ENCODE measurements at regions of chr5 and their contacts with region 1.

Region 1: GRCh38 chr5:149820536-149821510 is 90.7 kb downstream of the PPARGC1B start:
- DNase-seq: no peak
- ATAC-seq: no peak
- H3K4me3 ChIP-seq: peak overlapping the region; percentile 15 to 49 (median 37)
- H3K27ac ChIP-seq: peak overlapping the region in 9 of 10 donors; percentile 50 to 89 (median 79)
- H3K4me1 ChIP-seq: peaks cover 36 to 83% (median 53%) of the 10 kb centered on the region in 9 donors
- H3K27me3 ChIP-seq: no peaks in the 10 kb centered on the region
- CTCF ChIP-seq: no peak

Region 2: DNA sequence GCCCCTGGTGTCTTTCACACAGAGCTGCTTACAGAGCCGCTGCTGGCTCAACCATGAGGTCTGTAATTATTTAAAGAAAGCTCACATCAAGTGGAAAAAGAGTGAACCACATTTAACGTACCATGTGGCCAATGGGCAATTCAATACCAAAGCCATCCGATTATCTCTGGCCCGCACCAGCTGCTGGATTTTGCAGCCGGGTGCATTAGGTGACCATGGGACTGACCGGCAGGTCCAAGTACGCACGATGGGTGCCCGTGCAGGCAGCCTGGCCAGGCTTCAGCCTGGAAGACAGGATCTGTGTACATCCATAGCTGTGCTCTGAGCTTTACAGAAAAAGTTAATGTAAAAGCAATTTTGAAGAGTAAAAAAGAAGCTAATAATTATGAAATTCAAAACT is 70.2 kb before region 1 on chr5:
- intact Hi-C with region 1: no loop called
- DNase-seq: no peak
- ATAC-seq: peak in 6 of 8 donors; percentile 29 to 74 (median 44)
- H3K4me3 ChIP-seq: no peak overlapping the region
- H3K27ac ChIP-seq: peak overlapping the region in 6 of 10 donors; percentile 1 to 48 (median 23)
- H3K4me1 ChIP-seq: peaks cover 0 to 74% (median 32%) of the 10 kb centered on the region in 9 donors
- H3K27me3 ChIP-seq: no peaks in the 10 kb centered on the region
- CTCF ChIP-seq: no peak

Region 3: GRCh38 chr5:149775785-149776184 is 45.0 kb before region 1 on chr5:
- intact Hi-C with region 1: loop called in 5 of 10 experiments (anchors 2 to 5 kb)
- DNase-seq: no peak
- ATAC-seq: peak in 1 of 8 donors; percentile 19
- H3K4me3 ChIP-seq: no peak overlapping the region
- H3K27ac ChIP-seq: peak overlapping the region in 8 of 10 donors; percentile 30 to 79 (median 66)
- H3K4me1 ChIP-seq: peaks cover 29 to 97% (median 88%) of the 10 kb centered on the region in 9 donors
- H3K27me3 ChIP-seq: no peaks in the 10 kb centered on the region
- CTCF ChIP-seq: peak in 8 of 9 donors; percentile 14 to 64 (median 43)